Activated CD4-positive, alpha-beta T cell treated with anti-CD3 and anti-CD28 coated beads, Interleukin-2, amount 10 ng/mL, durations not matched to agents 24 days and 14 days (primary cell): ENCODE measurements at regions of chr12 and their contacts with region 1.

Region 1: GRCh38 chr12:94149119-94149780 is 873 bp downstream of the PLXNC1 start:
- DNase-seq: peak; percentile 86
- H3K4me3 Mint-ChIP-seq: peak overlapping the region; percentile 97
- H3K27ac Mint-ChIP-seq: peak overlapping the region; percentile 62
- H3K4me1 Mint-ChIP-seq: peaks cover 34% of the 10 kb centered on the region
- H3K27me3 Mint-ChIP-seq: peaks cover 21% of the 10 kb centered on the region

Region 2: DNA sequence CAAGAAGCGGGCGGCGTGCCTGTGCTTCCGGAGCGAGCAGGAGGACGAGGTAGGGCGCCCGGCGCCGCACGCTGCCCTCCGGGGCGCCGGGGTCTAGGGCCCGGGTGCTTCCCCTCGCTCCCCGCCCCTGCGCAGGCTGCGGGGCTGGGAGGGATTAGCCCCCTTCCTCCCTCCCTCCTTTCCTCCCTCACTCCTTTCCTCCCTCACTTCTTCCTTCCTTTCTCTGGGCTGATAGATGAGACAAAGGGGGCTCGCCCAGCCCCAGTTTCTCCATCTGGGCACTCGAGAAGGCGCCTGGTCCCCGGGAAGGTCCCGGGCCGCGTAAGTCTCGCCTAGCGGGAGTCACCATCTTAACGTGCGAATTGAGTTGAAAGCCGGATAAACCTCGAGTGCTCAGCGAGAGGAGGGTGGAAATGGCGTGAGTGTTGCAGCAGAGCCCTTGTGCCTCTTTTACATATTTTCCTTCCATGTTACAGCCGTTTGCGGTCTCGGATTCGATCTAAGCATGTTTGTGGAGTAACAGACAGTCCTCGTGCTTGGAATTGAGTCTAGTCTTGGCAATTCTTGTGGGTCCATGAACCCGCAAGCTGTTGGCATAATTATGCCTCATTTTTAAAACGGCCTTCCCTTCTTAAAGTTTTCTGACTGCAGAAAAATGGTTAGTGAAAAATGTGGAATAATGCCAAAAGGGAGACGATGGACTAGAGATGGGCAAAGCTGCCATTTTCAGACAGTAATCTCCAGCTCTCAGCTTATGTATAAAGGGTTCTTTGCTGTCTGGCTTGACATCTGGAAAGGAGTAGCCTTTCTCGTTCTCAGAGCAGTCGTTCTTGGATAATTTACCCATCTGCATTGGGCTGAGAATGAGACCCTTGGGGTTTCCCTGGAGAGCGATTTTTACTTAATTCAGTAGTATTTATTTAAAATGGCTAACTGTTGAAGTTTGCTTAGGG is 770.6 kb before region 1 on chr12:
- intact Hi-C with region 1: no loop called
- DNase-seq: peak; percentile 90
- H3K4me3 Mint-ChIP-seq: peak overlapping the region; percentile 100
- H3K27ac Mint-ChIP-seq: peak overlapping the region; percentile 100
- H3K4me1 Mint-ChIP-seq: peaks cover 37% of the 10 kb centered on the region
- H3K27me3 Mint-ChIP-seq: no peaks in the 10 kb centered on the region

Region 3: GRCh38 chr12:94109160-94109559 is 40.1 kb before region 1 on chr12:
- intact Hi-C with region 1: no loop called
- DNase-seq: no peak
- H3K4me3 Mint-ChIP-seq: peak overlapping the region; percentile 11
- H3K27ac Mint-ChIP-seq: peak overlapping the region; percentile 80
- H3K4me1 Mint-ChIP-seq: peaks cover 25% of the 10 kb centered on the region
- H3K27me3 Mint-ChIP-seq: peaks cover 8% of the 10 kb centered on the region

Region 4: GRCh38 chr12:94165163-94165562 is 15.9 kb after region 1 on chr12:
- intact Hi-C with region 1: loop called (anchors 2 kb)
- DNase-seq: no peak
- H3K4me3 Mint-ChIP-seq: no peak overlapping the region
- H3K27ac Mint-ChIP-seq: no peak overlapping the region
- H3K4me1 Mint-ChIP-seq: peaks cover 28% of the 10 kb centered on the region
- H3K27me3 Mint-ChIP-seq: no peaks in the 10 kb centered on the region

Region 5: GRCh38 chr12:94305130-94305957 is 156.1 kb after region 1 on chr12:
- intact Hi-C with region 1: loop called (anchors 2 kb)
- DNase-seq: peak; percentile 92
- H3K4me3 Mint-ChIP-seq: peak overlapping the region; percentile 60
- H3K27ac Mint-ChIP-seq: peak overlapping the region; percentile 82
- H3K4me1 Mint-ChIP-seq: peaks cover 47% of the 10 kb centered on the region
- H3K27me3 Mint-ChIP-seq: no peaks in the 10 kb centered on the region

Region 6: DNA sequence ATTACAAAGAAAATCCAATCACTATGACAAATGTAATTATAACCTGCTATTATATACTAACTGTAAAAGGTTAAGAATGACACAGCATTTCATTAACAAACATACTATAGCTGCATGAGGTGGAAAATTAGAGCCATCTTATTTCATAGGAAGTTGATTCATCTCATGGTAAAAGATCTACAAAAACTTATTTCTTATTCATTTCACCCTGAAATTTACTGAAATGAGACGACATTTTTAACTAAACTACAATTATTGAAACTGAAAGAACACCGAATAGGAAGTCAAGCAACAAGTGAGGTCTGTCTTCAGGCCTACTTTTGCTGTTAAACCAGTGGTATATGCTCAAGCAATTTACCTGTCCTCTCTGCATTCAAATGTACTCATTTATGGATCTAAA is 223.2 kb after region 1 on chr12:
- intact Hi-C with region 1: loop called (anchors 5 kb)
- DNase-seq: no peak
- H3K4me3 Mint-ChIP-seq: peak overlapping the region; percentile 35
- H3K27ac Mint-ChIP-seq: peak overlapping the region; percentile 85
- H3K4me1 Mint-ChIP-seq: peaks cover 23% of the 10 kb centered on the region
- H3K27me3 Mint-ChIP-seq: no peaks in the 10 kb centered on the region

Region 7: GRCh38 chr12:94532490-94533422 is 383.5 kb after region 1 on chr12:
- intact Hi-C with region 1: loop called (anchors 1 kb)
- DNase-seq: peak; percentile 92
- H3K4me3 Mint-ChIP-seq: no peak overlapping the region
- H3K27ac Mint-ChIP-seq: no peak overlapping the region
- H3K4me1 Mint-ChIP-seq: peaks cover 14% of the 10 kb centered on the region
- H3K27me3 Mint-ChIP-seq: peaks cover 7% of the 10 kb centered on the region

Region 8: GRCh38 chr12:94762259-94762942 is 613.2 kb after region 1 on chr12:
- intact Hi-C with region 1: loop called (anchors 10 kb)
- DNase-seq: no peak
- H3K4me3 Mint-ChIP-seq: no peak overlapping the region
- H3K27ac Mint-ChIP-seq: peak overlapping the region; percentile 20
- H3K4me1 Mint-ChIP-seq: peaks cover 13% of the 10 kb centered on the region
- H3K27me3 Mint-ChIP-seq: peaks cover 8% of the 10 kb centered on the region